HCT116 (cell line): ENCODE measurements at regions of chr14 and their contacts with region 1.

Region 1: DNA sequence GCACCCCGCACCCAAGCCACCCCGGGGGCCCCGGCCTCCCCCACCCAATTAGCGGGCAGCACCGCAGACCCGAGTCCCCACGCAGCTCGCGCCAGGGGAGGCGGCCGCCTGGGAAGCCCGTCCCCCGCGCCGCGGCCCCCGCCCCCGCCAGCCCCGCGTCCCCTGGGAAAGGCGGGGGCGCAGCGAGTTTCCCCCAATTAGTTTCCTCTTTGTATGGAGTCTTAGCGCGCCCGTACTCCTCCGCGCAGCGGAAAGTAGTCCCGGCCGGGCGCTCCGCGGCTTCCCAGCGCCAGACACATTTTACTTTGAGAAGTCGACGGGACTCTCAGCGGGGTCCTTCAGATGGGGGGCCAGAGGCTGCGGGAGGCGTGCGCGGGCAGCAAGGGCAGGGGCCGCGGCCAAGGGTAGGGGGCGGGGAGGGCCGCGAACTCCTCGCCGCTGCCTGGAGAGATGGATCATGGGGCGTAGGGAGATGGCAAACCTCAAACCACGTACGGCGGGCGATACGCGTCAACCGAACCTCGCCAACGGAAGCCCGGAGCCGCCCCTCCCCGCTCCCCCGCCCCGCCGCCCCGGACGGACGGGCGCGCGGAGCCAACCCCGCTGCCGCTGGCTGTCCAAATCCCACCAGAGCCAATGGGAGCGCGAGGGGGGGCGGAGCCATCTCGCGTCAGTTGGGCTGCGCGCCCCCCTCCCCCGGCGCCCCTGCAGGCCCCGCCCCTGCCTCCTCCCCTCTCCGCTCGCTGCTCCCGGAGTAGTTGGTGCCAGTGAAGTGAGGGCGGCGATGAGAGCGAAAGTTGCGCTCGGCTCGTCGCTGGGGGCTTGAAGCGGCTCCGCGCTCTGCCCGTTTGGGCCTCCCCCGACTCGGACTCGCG is at the start of gene RCOR1:
- DNase-seq: peak; percentile 93
- ATAC-seq: peak; percentile 83
- H3K4me3 ChIP-seq: peak within 1 kb of the TSS; percentile 80 to 92
- H3K27ac ChIP-seq: peak within 1 kb of the TSS; percentile 96
- H3K4me1 ChIP-seq: peaks cover 12 to 43% of the 10 kb centered on the region in 2 experiments
- H3K27me3 ChIP-seq: no peaks in the 10 kb centered on the region
- CTCF ChIP-seq: no peak
- POLR2A ChIP-seq: peak; percentile 72
- RAD21 ChIP-seq: peak; percentile 11; the same call in 1 of the 2 replicates
- total RNA-seq, gene RCOR1: 30.7 TPM

Region 2: DNA sequence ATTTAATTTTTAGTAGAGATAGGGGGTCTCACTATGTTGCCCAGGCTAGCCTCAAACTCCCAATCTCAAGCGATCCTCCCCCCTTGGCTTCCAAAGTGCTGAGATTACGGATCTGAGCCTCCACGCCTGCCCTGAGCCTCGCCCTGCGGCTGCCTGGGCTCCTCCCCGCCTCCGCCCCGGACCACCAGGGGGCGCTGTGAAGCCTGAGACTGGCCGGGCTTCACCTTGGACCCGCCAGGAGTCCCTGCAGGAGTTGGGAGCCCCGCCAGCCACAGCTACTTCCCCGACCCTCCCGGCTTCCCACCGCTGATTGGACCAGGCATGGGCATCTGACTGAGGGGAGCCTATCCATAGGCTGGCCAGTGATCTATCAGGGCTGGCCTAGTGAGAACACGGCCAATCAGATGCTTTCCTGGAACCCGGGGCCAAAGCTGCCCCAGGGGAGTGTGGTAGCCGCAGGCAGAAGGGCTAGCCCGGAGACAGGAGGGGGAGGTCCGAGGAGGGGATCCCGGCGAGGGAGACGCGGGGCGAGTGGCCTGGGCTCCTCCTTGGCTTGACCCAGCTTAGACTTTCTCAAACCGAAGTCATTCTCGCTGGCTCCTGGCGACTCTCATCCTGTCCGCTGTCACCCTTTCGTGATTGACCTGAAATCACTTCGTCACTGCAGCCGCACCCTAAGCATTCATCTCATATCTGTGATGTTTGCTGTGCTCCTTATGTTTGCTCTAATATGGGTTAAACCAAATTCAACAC is 67.5 kb before region 1 on chr14:
- CTCF ChIA-PET with region 1: interaction called, 10 read pairs
- POLR2A ChIA-PET with region 1: interaction called, 12 read pairs
- RAD21 ChIA-PET with region 1: interaction called in 1 of 2 experiments, 3 read pairs
- intact Hi-C with region 1: loop called (anchors 1 kb)
- DNase-seq: peak; percentile 98
- ATAC-seq: peak; percentile 92
- H3K4me3 ChIP-seq: peak overlapping the region; percentile 55 to 74
- H3K27ac ChIP-seq: peak overlapping the region; percentile 86
- H3K4me1 ChIP-seq: peaks cover 27 to 54% of the 10 kb centered on the region in 2 experiments
- H3K27me3 ChIP-seq: no peaks in the 10 kb centered on the region
- CTCF ChIP-seq: peak in 2 of 3 experiments; percentile 96 to 98; a peak in 4 of 6 replicates
- POLR2A ChIP-seq: peak; percentile 82
- RAD21 ChIP-seq: no peak

Region 3: GRCh38 chr14:102605025-102605424 is 12.9 kb after region 1 on chr14:
- CTCF ChIA-PET with region 1: interaction called, 17 read pairs
- POLR2A ChIA-PET with region 1: interaction called, 8 read pairs
- RAD21 ChIA-PET with region 1: no interaction called
- intact Hi-C with region 1: no loop called
- DNase-seq: no peak
- ATAC-seq: no peak
- H3K4me3 ChIP-seq: no peak overlapping the region
- H3K27ac ChIP-seq: no peak overlapping the region
- H3K4me1 ChIP-seq: peaks cover 33 to 54% of the 10 kb centered on the region in 2 experiments
- H3K27me3 ChIP-seq: no peaks in the 10 kb centered on the region
- CTCF ChIP-seq: no peak
- POLR2A ChIP-seq: no peak
- RAD21 ChIP-seq: no peak

Region 4: GRCh38 chr14:102694530-102695166 is 102.5 kb after region 1 on chr14:
- CTCF ChIA-PET with region 1: interaction called, 11 read pairs
- POLR2A ChIA-PET with region 1: interaction called, 4 read pairs
- RAD21 ChIA-PET with region 1: no interaction called
- intact Hi-C with region 1: no loop called
- DNase-seq: peak; percentile 48
- ATAC-seq: peak; percentile 85
- H3K4me3 ChIP-seq: no peak overlapping the region
- H3K27ac ChIP-seq: no peak overlapping the region
- H3K4me1 ChIP-seq: no peaks in the 10 kb centered on the region; a peak in 3 of 4 replicates
- H3K27me3 ChIP-seq: no peaks in the 10 kb centered on the region
- CTCF ChIP-seq: peak; percentile 59; a peak in 5 of 6 replicates
- POLR2A ChIP-seq: no peak
- RAD21 ChIP-seq: peak; percentile 75

Region 5: DNA sequence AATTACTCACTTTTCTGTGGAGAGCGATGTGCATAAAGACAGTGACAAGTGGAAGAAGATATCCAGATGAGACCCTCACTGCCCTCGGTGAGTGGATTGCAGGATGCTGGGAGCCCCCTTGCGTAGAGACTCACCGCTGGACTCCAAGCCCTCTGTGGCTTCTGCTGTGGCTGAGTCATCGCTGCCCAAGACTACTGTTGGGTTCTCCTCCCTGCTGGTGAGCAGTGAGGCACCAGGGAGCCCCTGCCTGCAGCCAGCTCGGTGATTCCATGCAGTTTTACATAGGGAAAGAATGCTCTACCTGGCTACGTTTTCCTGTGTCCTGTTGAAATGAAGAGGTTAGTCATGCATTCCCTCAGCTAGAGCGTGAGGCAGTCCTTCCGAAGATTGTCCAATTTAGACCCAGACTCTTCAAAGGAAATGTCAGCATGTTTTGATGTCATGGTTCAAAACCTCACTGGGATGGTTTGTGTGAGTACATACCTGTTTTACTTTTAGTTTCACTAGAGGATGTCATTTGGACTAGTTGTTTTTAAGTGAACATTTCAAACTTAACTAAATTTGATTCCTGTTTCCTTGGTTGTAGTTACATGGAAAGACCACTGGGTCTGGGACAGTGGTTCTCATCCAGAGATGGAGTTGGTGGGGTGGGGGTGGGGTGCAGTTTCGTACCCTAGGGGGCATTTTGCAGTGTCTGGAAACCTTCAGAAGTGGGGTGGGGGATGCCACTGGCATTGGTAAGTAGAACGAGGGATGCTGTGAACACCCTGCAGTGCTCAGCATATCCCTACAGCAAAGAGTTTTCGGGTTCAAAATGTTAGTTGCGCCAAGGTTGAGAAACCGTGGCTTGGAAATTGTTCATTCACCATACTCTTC is 213.5 kb after region 1 on chr14:
- CTCF ChIA-PET with region 1: no interaction called
- POLR2A ChIA-PET with region 1: no interaction called
- RAD21 ChIA-PET with region 1: no interaction called
- intact Hi-C with region 1: loop called (anchors 1 kb)
- DNase-seq: peak; percentile 68
- ATAC-seq: peak; percentile 80
- H3K4me3 ChIP-seq: peak overlapping the region; percentile 1 to 41; a peak in 3 of 4 replicates
- H3K27ac ChIP-seq: peak overlapping the region; percentile 88
- H3K4me1 ChIP-seq: peaks cover 44 to 68% of the 10 kb centered on the region in 2 experiments
- H3K27me3 ChIP-seq: no peaks in the 10 kb centered on the region
- CTCF ChIP-seq: peak in 2 of 3 experiments; percentile 20 to 43; a peak in 4 of 6 replicates
- POLR2A ChIP-seq: no peak
- RAD21 ChIP-seq: peak; percentile 42; the same call in 1 of the 2 replicates

Region 6: GRCh38 chr14:102917469-102918211 is 325.5 kb after region 1 on chr14:
- CTCF ChIA-PET with region 1: no interaction called
- POLR2A ChIA-PET with region 1: no interaction called
- RAD21 ChIA-PET with region 1: no interaction called
- intact Hi-C with region 1: loop called (anchors 10 kb)
- DNase-seq: peak; percentile 18
- ATAC-seq: peak; percentile 71
- H3K4me3 ChIP-seq: no peak overlapping the region
- H3K27ac ChIP-seq: no peak overlapping the region
- H3K4me1 ChIP-seq: no peaks in the 10 kb centered on the region
- H3K27me3 ChIP-seq: no peaks in the 10 kb centered on the region
- CTCF ChIP-seq: peak; percentile 75 to 79 (median 78)
- POLR2A ChIP-seq: no peak
- RAD21 ChIP-seq: peak; percentile 90